Aorta (tissue), 5 donors: ENCODE measurements at regions of chr15 and their contacts with region 1.

Region 1: DNA sequence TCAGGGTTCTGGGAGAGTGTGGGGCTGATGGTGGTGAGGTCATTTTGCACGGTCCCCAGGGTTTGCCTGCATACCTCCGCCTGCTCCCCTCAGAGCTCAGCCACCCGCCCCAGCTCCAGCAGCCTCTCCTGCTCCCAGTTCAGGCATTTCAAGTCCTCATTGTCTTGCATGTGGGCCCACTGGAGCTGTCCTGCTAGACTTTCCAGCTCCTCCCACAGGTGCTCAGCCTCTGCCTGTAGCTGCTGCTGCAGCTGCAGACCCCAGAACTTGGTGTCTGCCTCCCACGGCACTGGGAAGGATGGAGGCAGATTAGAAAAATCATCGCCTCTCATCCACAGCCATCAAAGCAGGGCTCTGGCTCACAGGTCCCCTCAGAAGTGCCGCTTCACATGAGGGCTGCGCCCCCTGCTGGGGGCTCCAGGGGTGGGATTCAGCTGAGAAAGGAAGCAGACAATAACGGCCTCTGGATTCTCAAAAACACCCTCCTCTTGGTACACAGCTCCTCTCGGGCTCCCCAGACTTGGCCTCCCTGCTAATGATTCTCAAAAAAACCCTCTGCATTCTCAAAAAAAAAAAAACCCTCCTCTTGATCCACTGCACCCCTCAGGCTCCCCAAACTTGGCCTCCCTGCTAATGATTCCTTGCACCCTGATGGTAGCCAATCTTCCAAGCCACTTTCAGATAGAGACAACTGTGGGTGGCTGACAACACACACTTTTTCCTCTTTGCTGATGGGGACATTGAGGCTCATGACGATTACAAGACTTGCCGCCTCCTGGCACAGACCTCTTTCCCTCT is 89.3 kb upstream of the C2CD4B start:
- DNase-seq: peak; percentile 65 to 87
- ATAC-seq: no peak
- H3K4me3 ChIP-seq: no peak overlapping the region
- H3K27ac ChIP-seq: no peak overlapping the region
- H3K4me1 ChIP-seq: no peaks in the 10 kb centered on the region
- H3K27me3 ChIP-seq: no peaks in the 10 kb centered on the region

Region 2: DNA sequence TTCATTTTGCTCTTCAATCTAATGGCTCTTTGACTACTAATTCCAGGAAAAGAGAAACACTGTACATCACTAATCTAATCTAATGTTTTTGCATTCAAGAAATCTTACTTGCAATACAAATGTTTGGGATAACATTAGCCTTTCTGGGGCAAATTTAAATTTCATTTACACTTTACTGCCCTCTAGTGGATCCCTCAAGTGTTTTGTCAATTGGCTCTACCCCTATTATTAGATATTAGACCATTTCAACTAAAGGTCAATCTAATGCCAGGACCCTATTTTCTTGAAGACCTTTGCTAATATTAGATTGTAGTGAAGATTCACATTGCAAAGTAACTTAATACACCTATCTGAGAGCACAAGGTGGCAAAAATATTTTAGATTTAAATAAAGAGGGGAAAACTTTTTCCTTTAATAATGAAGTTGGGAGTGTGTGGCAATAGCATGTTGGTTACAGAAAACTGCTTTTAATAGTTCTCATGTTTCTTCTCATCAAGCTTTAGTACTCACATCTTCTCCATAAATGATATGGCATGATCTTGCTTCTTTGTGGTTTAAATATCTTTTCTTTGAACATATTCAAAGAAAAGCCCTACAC is 182.5 kb before region 1 on chr15:
- intact Hi-C with region 1: loop called in 1 of 2 experiments (anchors 10 kb)
- DNase-seq: no peak
- ATAC-seq: peak; percentile 53
- H3K4me3 ChIP-seq: no peak overlapping the region
- H3K27ac ChIP-seq: no peak overlapping the region
- H3K4me1 ChIP-seq: no peaks in the 10 kb centered on the region
- H3K27me3 ChIP-seq: no peaks in the 10 kb centered on the region

Region 3: GRCh38 chr15:62287066-62287857 is 32.9 kb after region 1 on chr15:
- intact Hi-C with region 1: no loop called
- DNase-seq: no peak
- ATAC-seq: no peak
- H3K4me3 ChIP-seq: no peak overlapping the region
- H3K27ac ChIP-seq: no peak overlapping the region
- H3K4me1 ChIP-seq: no peaks in the 10 kb centered on the region
- H3K27me3 ChIP-seq: no peaks in the 10 kb centered on the region